ENCODE measurements at regions of chr1 and their contacts with region 1.

Region 1: GRCh38 chr1:53182111-53182593 is 14.5 kb upstream of the CPT2 start:
- DNase-seq: peak; percentile 95
- H3K4me3 Mint-ChIP-seq: no peak overlapping the region
- H3K27ac Mint-ChIP-seq: no peak overlapping the region
- H3K4me1 Mint-ChIP-seq: no peaks in the 10 kb centered on the region
- H3K27me3 Mint-ChIP-seq: peaks cover 4% of the 10 kb centered on the region

Region 2: DNA sequence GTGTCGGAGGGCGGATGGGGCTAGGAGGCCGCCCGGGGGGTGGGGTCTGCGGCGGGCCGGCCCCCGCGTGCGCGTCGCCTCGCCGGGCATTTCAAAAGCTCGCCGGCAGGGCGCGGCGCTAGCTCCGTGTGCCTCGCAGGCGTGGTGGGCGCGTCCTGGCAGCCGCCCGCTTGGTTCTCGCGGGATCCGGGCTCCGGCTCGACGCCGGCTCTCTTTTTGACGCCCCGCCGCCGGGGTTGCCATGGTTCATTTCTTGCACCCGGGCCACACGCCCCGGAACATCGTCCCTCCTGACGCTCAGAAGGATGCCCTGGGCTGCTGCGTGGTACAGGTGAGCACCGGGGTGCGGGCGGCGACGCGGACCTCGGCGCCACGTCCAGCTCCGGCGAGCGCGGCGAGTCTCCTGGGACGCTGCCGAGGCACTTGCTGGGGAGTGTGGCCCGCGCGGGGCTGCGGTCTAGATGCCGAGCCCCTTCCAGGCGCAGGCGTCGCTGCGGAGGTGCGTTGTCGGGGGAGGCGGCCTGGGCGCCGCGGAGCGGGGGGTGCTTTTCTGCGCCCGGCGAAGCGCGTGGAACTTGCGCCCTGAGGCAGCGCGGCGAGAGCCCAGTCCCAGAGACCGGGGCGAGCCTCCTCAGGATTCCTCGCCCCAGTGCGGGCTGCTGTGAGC is 339.4 kb before region 1 on chr1 and contains the start of gene ZYG11A:
- CTCF ChIA-PET with region 1: interaction called, 3 read pairs
- intact Hi-C with region 1: loop called (anchors 10 kb)
- DNase-seq: peak; percentile 81
- H3K4me3 Mint-ChIP-seq: peak within 1 kb of the TSS; percentile 65
- H3K27ac Mint-ChIP-seq: no peak within 1 kb of the TSS
- H3K4me1 Mint-ChIP-seq: peaks cover 1% of the 10 kb centered on the region
- H3K27me3 Mint-ChIP-seq: peaks cover 18% of the 10 kb centered on the region
- total RNA-seq, gene ZYG11A: 0.05 TPM

Region 3: GRCh38 chr1:52904927-52905698 is 277.0 kb before region 1 on chr1:
- CTCF ChIA-PET with region 1: interaction called, 4 read pairs
- intact Hi-C with region 1: loop called (anchors 1 kb)
- DNase-seq: peak; percentile 45
- H3K4me3 Mint-ChIP-seq: no peak overlapping the region
- H3K27ac Mint-ChIP-seq: no peak overlapping the region
- H3K4me1 Mint-ChIP-seq: no peaks in the 10 kb centered on the region
- H3K27me3 Mint-ChIP-seq: no peaks in the 10 kb centered on the region

Region 4: DNA sequence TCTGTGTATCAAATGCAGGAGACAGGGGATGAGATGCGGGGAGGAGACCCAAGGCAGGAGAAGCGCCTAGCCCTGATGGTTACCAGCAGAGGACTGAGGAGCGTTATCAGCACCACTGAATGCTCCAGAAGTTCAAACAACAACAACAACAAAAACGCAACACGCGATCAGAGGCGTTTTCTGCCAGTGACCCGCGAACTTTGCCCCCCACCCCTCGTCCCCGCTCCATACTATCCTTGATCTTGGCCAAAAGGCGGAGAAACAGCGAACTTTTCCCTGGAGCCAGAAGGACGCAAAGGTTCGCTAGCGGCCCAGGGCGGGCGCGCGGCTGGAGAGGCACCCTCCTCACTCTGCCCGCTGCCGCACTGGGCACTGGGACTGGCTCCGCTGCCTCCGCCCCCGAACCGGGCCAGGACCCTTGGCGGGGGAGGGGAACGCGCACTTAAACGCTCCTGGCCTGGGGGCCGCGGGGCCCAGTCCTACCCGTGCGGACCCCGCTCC is 261.3 kb before region 1 on chr1:
- CTCF ChIA-PET with region 1: interaction called, 3 read pairs
- intact Hi-C with region 1: loop called (anchors 5 kb)
- DNase-seq: no peak
- H3K4me3 Mint-ChIP-seq: peak overlapping the region; percentile 78
- H3K27ac Mint-ChIP-seq: no peak overlapping the region
- H3K4me1 Mint-ChIP-seq: peaks cover 27% of the 10 kb centered on the region
- H3K27me3 Mint-ChIP-seq: no peaks in the 10 kb centered on the region

Region 5: DNA sequence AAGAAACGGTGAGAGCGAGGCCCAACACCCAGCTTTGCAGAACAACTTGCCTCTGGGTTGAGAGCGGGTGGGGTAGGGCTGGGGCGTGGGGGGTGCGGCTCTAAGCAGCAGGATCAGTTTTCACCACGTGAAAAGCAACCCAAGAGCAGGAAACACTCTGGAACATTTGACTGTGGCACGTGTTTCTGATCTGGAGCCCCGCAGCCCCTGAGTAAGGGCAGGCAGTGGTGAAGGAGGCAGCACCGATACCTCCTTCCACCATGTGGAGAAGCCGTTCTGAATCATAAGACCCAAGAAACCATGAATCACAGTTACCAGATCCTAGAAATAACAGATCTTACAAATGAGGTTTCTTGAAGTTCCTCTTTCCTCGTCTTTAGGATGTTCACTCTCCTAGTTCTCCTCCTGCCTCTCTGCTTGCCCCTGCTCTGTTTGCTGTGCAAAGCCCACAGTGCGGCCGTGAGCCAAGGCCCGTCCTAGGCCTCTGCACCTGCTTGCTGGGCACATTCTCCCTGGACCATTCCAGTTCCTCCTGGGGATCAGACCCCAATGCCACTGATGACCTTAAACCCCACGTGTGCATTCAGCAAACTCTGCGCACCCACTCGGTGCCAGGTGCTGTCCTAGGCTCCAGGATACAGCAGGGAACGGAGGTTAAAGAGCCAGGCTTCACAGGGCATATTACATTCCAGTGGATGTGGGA is 71.6 kb before region 1 on chr1:
- CTCF ChIA-PET with region 1: interaction called, 4 read pairs
- intact Hi-C with region 1: loop called (anchors 5 kb)
- DNase-seq: peak; percentile 30
- H3K4me3 Mint-ChIP-seq: no peak overlapping the region
- H3K27ac Mint-ChIP-seq: no peak overlapping the region
- H3K4me1 Mint-ChIP-seq: peaks cover 25% of the 10 kb centered on the region
- H3K27me3 Mint-ChIP-seq: no peaks in the 10 kb centered on the region

Region 6: DNA sequence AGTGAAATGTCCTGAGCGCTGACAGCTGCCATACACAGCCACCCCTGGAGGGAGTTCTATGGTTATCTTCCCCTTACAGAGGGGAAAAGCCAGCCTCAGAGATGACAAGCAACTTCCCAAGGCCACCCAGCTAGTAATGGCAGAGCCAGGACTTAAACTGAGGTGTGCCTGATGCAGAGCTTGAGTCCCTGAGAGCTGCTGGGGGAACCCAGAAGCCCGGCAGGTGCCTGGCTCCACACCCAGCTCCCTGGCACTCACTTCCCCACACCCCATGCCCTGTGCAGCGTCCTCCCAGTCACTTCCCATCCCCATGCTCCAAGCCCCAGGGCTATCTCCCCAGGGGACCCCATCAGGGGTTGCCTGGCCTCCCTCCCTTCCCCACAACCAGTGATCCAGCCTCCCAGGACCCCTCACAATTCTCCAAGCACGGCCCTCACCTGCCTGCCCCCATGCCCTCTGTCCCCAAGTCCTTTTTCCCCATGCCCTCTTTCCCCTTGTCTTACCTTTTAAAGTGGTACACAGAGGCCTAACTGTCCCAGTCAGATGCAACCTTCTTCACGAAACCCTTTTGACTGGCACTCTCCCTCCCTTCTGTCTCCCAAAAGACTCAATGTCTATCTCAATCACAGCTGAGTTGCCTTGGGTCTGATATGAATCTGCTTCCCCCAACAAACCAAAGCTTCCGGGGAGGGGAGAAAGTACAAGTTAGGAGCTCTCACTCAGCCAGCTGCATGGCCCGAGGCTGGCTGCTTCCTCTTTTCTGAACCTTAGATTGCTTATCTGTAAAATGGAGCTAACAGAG is 185.6 kb after region 1 on chr1:
- CTCF ChIA-PET with region 1: no interaction called
- intact Hi-C with region 1: no loop called
- DNase-seq: peak; percentile 69
- H3K4me3 Mint-ChIP-seq: peak overlapping the region; percentile 71
- H3K27ac Mint-ChIP-seq: peak overlapping the region; percentile 54
- H3K4me1 Mint-ChIP-seq: peaks cover 19% of the 10 kb centered on the region
- H3K27me3 Mint-ChIP-seq: no peaks in the 10 kb centered on the region